Mucosa of descending colon (tissue), 3 donors: ENCODE measurements at regions of chr5 and their contacts with region 1.

Region 1: DNA sequence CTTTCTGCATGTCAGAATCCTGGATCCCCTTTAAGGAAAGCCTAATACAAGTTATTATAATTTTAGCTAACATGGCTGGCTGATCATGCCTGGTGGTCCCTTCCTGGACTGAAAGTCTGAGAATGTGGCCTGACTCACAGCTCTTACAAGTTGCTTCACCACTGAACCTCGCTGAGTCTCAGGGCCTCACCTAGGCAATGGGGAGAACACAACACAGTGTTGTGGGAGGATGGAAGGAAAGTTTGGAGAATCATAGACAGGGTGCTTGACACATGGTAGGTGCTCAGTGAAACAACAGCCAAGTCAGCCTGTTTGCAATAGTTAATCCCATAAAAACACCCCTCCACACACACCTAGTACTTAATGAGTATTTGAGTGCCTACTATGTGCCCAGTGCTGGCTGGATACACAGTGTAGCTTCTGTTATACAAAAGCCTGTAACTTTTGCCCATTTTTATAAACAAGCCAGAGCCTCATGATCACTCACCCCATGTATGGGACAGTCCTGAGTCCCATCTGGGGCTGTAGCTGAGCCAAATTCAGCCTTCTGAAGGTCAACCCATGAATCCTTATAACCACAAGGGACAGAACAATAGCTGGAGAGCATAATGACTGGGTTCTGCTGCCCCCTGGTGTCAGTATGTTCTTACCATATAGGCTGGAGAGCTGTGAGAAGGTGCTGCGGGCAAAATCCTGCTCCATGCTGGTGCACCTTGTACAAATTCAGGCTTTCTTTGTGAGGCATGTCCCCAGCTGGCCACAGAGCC is 3.9 kb downstream of the ACSL6 start:
- DNase-seq: peak; percentile 35 to 98 (median 64)
- ATAC-seq: peak; percentile 84
- H3K4me3 ChIP-seq: no peak overlapping the region
- H3K4me1 ChIP-seq: peaks cover 10% of the 10 kb centered on the region
- CTCF ChIP-seq: peak; percentile 44

Region 2: DNA sequence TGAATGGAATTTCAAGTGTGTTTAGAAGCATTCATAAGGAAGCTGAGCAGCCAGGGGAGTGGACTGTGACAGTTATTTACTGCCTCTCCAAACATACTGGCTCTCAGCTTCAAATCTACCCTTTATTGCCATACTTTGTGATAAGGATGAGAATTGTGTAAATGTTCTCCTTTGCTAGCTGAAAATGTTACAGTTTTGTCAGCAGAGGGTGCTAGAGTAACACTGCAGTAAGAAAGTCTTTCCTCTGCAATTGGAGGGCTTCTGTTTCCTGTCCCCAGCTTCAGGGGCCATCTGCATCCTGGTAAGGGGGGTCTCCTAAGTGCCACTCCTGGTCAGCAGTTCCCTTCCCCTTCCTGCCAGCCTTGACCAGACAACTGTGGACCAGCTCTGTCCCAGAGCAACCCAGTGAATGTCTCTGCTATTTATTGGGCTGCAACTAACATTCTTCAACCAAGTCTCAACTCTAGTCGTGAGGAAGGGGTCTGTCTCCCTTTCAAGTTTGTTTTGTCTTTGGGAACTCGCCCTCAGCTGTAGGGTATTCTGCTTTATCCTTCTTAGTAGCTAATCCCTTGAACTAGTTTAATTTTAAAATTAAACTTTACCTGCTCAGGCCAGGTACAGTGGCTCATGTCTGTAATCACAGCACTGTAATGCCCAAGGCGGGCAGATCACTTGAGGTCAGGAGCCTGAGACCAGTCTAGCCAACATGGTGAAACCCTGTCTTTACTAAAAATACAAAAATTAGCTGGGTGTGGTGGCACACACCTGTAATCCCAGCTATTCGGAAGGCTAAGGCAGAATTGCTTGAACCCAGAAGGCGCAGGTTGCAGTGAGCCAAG is 417.9 kb before region 1 on chr5:
- intact Hi-C with region 1: loop called (anchors 2 to 5 kb)
- DNase-seq: peak in 2 of 3 donors; percentile 31 to 47
- ATAC-seq: peak; percentile 97
- H3K4me3 ChIP-seq: no peak overlapping the region
- H3K4me1 ChIP-seq: peaks cover 9% of the 10 kb centered on the region
- CTCF ChIP-seq: peak; percentile 33

Region 3: GRCh38 chr5:131957721-131958441 is 49.7 kb before region 1 on chr5:
- intact Hi-C with region 1: no loop called
- DNase-seq: no peak
- ATAC-seq: no peak
- H3K4me3 ChIP-seq: no peak overlapping the region
- H3K4me1 ChIP-seq: no peaks in the 10 kb centered on the region
- CTCF ChIP-seq: no peak